Right ventricle myocardium inferior (tissue), 1 donor: ENCODE measurements at regions of chr2 and their contacts with region 1.

Region 1: GRCh38 chr2:227479865-227480475 is 8.0 kb downstream of the AGFG1 start:
- DNase-seq: no peak
- ATAC-seq: peak; percentile 65

Region 2: GRCh38 chr2:227509824-227510619 is 30.1 kb after region 1 on chr2:
- intact Hi-C with region 1: loop called (anchors 5 kb)
- DNase-seq: no peak
- ATAC-seq: no peak

Region 3: DNA sequence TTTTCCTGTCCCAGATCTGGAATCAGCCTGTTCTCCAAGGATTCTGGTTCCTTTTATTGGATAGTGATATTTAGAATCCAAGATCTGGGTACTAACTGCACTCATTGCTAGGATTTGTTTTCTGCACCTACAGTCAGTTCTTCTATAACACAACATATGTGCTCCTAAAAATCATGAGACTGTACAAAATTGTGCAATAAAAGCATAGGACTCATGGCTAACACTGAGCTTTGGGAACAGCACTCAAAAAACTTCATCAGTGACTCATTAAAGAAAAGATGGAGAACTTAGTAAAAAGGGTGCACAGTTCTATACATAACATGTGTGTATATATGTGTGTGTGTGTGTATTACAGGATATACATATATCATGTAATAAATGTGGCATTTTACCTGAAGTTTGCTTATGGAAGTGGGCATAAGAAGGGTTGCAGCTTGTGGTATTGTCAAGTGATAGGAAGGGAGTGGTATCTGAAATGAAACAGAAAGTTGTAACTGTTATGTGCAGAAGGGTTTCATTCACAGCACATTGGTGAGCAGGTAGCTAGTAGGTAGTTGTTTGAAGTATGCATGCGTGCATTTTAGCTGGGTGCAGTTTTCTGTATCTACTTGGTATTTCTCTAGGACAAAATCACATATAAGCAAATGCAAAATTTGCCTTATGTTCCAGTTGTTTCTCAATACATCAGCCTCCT is 112.9 kb after region 1 on chr2:
- intact Hi-C with region 1: no loop called
- DNase-seq: no peak
- ATAC-seq: no peak